ENCODE measurements at regions of chr3 and their contacts with region 1.

Region 1: DNA sequence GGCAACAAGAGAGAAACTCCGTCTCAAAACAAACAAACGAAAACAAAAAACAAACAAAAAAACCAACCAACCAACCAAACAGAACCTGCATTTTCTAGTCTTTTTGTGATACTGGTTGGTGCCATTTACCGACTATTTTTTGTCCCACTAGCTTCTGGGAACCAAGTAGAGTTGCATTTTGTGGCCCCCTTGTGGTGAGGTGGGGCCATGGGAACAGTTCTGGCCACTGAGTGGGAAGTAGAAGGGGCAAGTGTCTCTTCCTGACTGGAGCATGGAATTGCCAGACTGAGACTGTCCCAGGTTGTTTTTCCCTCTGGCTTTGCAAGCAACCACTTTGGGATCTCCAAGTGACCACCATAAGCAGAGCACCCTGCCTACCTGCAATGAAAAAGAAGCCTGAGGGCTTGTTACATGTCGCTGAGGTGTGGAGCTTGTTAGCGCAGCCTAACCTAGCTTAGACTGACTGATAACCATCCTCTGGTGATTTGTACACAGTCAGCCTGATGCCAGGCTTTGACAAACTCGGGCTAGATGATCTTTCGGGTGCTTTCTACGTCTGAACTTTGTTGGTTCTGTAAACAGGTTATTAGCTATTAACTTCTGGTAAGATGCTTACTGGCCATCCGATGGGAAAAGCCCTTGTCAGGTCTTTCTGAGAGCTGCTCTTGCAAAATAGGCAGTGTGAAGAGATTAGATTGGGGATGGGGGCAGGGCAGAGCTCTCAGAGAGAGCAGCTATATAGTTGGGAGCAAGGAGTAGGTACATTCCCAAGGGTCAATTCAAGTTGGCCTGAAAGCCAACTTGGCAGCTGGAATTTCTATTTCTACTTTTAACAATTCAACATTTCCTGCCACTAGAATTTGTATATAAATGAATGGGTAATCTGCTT is 172.2 kb downstream of the SSR3 start:
- DNase-seq: peak; percentile 70
- H3K4me3 ChIP-seq: no peak overlapping the region
- H3K27ac ChIP-seq: no peak overlapping the region
- H3K4me1 ChIP-seq: no peaks in the 10 kb centered on the region
- H3K27me3 ChIP-seq: no peaks in the 10 kb centered on the region
- CTCF ChIP-seq: peak; percentile 82

Region 2: GRCh38 chr3:156174229-156174847 is 208.4 kb before region 1 on chr3:
- CTCF ChIA-PET with region 1: interaction called, 16 read pairs
- POLR2A ChIA-PET with region 1: no interaction called
- intact Hi-C with region 1: loop called (anchors 2 kb)
- DNase-seq: peak; percentile 54
- H3K4me3 ChIP-seq: no peak overlapping the region
- H3K27ac ChIP-seq: no peak overlapping the region
- H3K4me1 ChIP-seq: no peaks in the 10 kb centered on the region
- H3K27me3 ChIP-seq: no peaks in the 10 kb centered on the region
- CTCF ChIP-seq: peak; percentile 51

Region 3: DNA sequence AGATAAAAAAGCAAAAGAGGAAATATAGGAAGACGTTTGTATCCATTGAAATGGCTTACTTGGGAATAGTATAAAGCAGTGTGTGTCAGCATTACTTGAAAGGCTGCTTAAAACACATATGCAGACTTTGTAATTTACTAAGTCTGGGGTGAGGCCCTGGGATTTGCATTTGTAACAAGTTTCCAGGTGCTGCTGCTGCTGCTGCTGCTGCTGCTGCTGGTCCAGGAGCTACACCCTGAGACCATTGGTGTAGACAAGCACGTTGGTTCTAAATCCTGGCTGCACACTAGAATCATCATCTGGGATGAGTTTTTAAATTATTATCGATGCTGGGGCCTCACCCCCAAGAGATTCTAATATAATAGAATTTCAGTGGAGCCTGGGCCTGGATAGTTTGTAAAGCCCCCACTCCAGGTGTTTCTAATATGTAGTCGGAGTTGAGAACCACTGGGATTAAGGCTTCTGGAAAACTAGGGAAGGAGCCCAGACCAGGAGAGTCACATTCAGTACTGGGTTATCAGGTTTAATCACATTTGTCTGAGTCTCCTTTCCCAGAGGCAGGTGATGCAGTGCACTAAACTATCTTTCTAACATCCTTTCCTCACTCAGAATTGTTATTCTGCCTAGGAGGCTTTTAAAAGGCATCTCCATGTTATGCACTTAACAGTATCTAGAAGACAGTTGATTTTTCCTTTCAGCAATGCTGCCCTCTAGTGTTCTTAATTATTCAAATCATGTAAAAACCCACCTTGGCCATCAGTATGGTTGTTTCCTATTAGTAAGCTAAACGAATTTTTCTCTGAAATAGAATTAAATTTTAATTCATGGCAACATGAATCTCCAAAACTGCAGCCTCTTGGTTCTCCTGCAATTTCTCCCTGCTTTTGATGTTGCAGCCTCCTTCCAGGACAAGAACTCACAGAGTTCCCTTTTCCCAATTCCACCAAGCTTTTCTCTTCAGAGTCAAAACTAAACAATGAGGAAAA is 126.8 kb after region 1 on chr3:
- CTCF ChIA-PET with region 1: no interaction called
- POLR2A ChIA-PET with region 1: no interaction called
- intact Hi-C with region 1: loop called (anchors 5 kb)
- DNase-seq: peak; percentile 77
- H3K4me3 ChIP-seq: no peak overlapping the region
- H3K27ac ChIP-seq: no peak overlapping the region
- H3K4me1 ChIP-seq: peaks cover 6% of the 10 kb centered on the region
- H3K27me3 ChIP-seq: no peaks in the 10 kb centered on the region
- CTCF ChIP-seq: peak; percentile 78

Region 4: DNA sequence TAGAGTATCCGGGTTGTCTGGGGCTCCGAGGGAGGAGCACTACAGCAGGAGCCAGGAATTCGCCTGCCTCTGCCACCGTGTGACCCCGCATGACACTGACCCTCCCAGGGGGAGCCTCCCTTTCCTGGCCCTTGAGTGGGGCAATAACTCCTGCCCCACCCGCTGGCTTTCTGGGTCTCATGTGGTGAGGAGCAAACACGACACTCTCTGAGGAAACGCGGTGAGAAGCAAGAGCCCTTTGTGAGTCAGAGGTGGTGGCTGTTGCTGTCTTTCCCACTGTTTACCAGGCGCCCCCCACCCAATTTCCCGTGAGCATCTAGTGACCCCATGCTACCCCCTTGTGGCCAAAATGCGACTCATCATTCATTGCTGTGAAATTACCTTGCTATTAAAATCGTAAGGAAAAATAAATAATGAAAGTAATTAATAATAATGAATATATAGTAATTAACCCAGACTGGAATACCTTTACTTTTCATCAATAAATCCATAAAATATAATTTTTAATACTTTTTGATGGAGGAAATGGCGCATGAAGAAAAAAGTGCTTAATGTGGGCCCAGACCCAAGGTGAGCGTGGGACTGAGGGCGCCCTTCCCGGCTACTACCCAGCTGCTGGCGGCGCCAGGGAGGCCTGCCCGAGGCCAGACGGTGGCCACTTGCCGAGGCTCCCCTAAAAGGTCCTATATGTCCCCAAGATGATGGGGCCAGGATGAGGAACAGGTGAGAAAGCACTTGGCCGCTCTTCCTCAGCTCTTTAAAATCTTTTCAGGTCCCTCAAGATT is 748.0 kb after region 1 on chr3:
- CTCF ChIA-PET with region 1: no interaction called
- POLR2A ChIA-PET with region 1: no interaction called
- intact Hi-C with region 1: loop called (anchors 5 kb)
- DNase-seq: peak; percentile 82
- H3K4me3 ChIP-seq: peak overlapping the region; percentile 7
- H3K27ac ChIP-seq: peak overlapping the region; percentile 75
- H3K4me1 ChIP-seq: peaks cover 46% of the 10 kb centered on the region
- H3K27me3 ChIP-seq: no peaks in the 10 kb centered on the region
- CTCF ChIP-seq: peak; percentile 84